H1 (cell line): ENCODE measurements at regions of chr7 and their contacts with region 1.

Region 1: DNA sequence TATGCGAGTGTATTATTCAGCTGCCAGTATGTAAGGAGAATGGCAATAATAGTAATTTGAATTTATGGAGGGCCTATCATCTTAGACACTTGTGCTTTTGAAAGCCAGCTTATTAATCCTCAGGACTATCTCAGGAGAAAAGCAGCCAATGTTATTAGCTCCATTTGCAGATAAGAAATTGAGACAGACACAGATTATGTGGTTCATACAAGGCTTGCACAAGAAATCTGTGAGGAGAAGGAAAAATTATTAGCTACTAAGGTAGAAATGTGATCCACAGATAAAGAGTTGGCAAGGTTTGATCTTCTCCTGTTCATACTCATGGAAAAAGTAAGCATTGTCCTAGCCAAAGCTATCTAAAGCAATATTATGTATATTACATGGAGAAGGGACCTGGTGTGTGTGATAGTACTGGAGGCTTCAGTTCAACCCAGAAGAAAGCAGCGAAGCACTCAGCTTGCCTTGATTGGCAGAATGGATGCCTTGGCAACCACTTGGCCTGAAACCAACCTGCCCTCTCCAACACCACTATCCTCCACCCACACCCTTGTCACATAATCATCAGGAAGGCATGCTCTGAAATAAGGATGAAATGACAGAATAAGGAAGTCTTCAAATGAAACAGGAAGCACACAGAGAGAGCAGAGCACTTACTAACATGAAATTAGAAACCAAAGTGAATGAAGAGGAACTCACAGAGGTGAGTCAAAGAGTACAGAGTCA is 18.0 kb downstream of the MACC1 start:
- DNase-seq: no peak
- H3K4me3 ChIP-seq: no peak overlapping the region
- H3K27ac ChIP-seq: no peak overlapping the region
- H3K4me1 ChIP-seq: peaks cover 0 to 6% (median 6%) of the 10 kb centered on the region in 4 experiments; a peak in 4 of 7 replicates
- H3K27me3 ChIP-seq: no peaks in the 10 kb centered on the region
- CTCF ChIP-seq: no peak
- EP300 ChIP-seq: no peak
- POLR2A ChIP-seq: no peak
- RAD21 ChIP-seq: no peak

Region 2: GRCh38 chr7:19982841-19983835 is 216.0 kb before region 1 on chr7:
- CTCF ChIA-PET with region 1: interaction called, 25 read pairs
- POLR2A ChIA-PET with region 1: no interaction called
- DNase-seq: peak in 1 of 2 experiments; percentile 65
- H3K4me3 ChIP-seq: no peak overlapping the region
- H3K27ac ChIP-seq: no peak overlapping the region
- H3K4me1 ChIP-seq: peaks cover 0 to 8% (median 3%) of the 10 kb centered on the region in 4 experiments; a peak in 1 of 7 replicates
- H3K27me3 ChIP-seq: no peaks in the 10 kb centered on the region
- CTCF ChIP-seq: peak in 2 of 3 experiments; percentile 58 to 71; a peak in 3 of 4 replicates
- EP300 ChIP-seq: no peak
- POLR2A ChIP-seq: peak in 1 of 2 experiments; percentile 33; a peak in 1 of 3 replicates
- RAD21 ChIP-seq: peak; percentile 87 to 90